Heart right ventricle (tissue), 16 donors: ENCODE measurements at regions of chr20 and their contacts with region 1.

Region 1: DNA sequence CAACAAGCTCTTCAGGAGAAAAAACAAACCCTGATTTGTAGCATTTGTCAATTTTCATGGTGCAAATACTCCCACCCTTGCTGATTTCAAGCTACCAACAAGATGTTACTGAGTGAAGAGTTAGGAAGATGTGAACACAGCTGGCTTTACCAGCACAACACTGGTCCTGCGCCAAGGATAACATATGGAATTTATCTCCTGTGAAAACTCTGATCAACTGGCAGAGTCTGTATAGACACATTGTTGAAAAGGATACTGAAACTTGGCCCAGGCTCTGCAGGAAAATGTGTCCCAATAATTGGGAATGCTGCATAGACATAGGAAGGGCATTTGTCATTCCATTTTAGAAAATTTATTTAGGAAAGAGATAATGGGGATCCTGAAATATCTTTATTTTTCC is 29.0 kb downstream of the OTOR start:
- DNase-seq: no peak
- ATAC-seq: no peak
- H3K4me3 ChIP-seq: no peak overlapping the region
- H3K27ac ChIP-seq: no peak overlapping the region
- H3K4me1 ChIP-seq: no peaks in the 10 kb centered on the region
- H3K27me3 ChIP-seq: no peaks in the 10 kb centered on the region
- CTCF ChIP-seq: no peak

Region 2: GRCh38 chr20:16607364-16608276 is 169.5 kb before region 1 on chr20:
- intact Hi-C with region 1: no loop called
- DNase-seq: no peak
- ATAC-seq: peak in 5 of 8 donors; percentile 48 to 78 (median 62)
- H3K4me3 ChIP-seq: no peak overlapping the region
- H3K27ac ChIP-seq: peak overlapping the region in 1 of 10 donors; percentile 15
- H3K4me1 ChIP-seq: peaks cover 0 to 24% (median 11%) of the 10 kb centered on the region in 9 donors
- H3K27me3 ChIP-seq: no peaks in the 10 kb centered on the region
- CTCF ChIP-seq: no peak

Region 3: GRCh38 chr20:16710781-16711180 is 66.3 kb before region 1 on chr20:
- intact Hi-C with region 1: loop called in 1 of 10 experiments (anchors 10 kb)
- DNase-seq: no peak
- ATAC-seq: no peak
- H3K4me3 ChIP-seq: no peak overlapping the region
- H3K27ac ChIP-seq: no peak overlapping the region
- H3K4me1 ChIP-seq: peaks cover 0 to 9% (median 0%) of the 10 kb centered on the region in 9 donors
- H3K27me3 ChIP-seq: peaks cover 0 to 7% (median 0%) of the 10 kb centered on the region in 7 donors
- CTCF ChIP-seq: no peak